Spleen (tissue), 13 donors: ENCODE measurements at regions of chr3 and their contacts with region 1.

Region 1: GRCh38 chr3:33636125-33636850 is 81.8 kb downstream of the CLASP2 start:
- DNase-seq: no peak
- H3K4me3 ChIP-seq: no peak overlapping the region
- H3K27ac ChIP-seq: no peak overlapping the region
- H3K4me1 ChIP-seq: peaks cover 0 to 14% (median 0%) of the 10 kb centered on the region in 6 donors
- H3K27me3 ChIP-seq: no peaks in the 10 kb centered on the region
- CTCF ChIP-seq: peak; percentile 23 to 62 (median 54)
- POLR2A ChIP-seq: no peak

Region 2: GRCh38 chr3:33186524-33187367 is 449.5 kb before region 1 on chr3:
- intact Hi-C with region 1: no loop called
- DNase-seq: no peak
- H3K4me3 ChIP-seq: no peak overlapping the region
- H3K27ac ChIP-seq: no peak overlapping the region
- H3K4me1 ChIP-seq: no peaks in the 10 kb centered on the region
- H3K27me3 ChIP-seq: no peaks in the 10 kb centered on the region
- CTCF ChIP-seq: no peak
- POLR2A ChIP-seq: no peak

Region 3: GRCh38 chr3:33758864-33759263 is 122.6 kb after region 1 on chr3:
- intact Hi-C with region 1: no loop called
- DNase-seq: no peak
- H3K4me3 ChIP-seq: no peak overlapping the region
- H3K27ac ChIP-seq: no peak overlapping the region
- H3K4me1 ChIP-seq: no peaks in the 10 kb centered on the region
- H3K27me3 ChIP-seq: no peaks in the 10 kb centered on the region
- CTCF ChIP-seq: no peak
- POLR2A ChIP-seq: no peak

Region 4: GRCh38 chr3:33787328-33788009 is 151.2 kb after region 1 on chr3:
- intact Hi-C with region 1: loop called (anchors 10 kb)
- DNase-seq: no peak
- H3K4me3 ChIP-seq: peak overlapping the region in 2 of 8 donors; percentile 13 to 45
- H3K27ac ChIP-seq: no peak overlapping the region
- H3K4me1 ChIP-seq: peaks cover 0 to 12% (median 4%) of the 10 kb centered on the region in 6 donors
- H3K27me3 ChIP-seq: peaks cover 0 to 13% (median 0%) of the 10 kb centered on the region in 7 donors
- CTCF ChIP-seq: peak in 10 of 11 experiments; percentile 52 to 81 (median 74)
- POLR2A ChIP-seq: no peak